ENCODE measurements at regions of chr13 and their contacts with region 1.

Region 1: GRCh38 chr13:44259045-44260027 is 114.3 kb upstream of the SERP2 start:
- DNase-seq: peak; percentile 47
- ATAC-seq: peak; percentile 92
- H3K4me3 ChIP-seq: peak overlapping the region; percentile 42
- H3K27ac ChIP-seq: peak overlapping the region; percentile 58
- H3K4me1 ChIP-seq: peaks cover 10% of the 10 kb centered on the region
- H3K27me3 ChIP-seq: no peaks in the 10 kb centered on the region
- CTCF ChIP-seq: no peak
- EP300 ChIP-seq: peak in 1 of 2 experiments; percentile 65; a peak in 1 of 4 replicates
- POLR2A ChIP-seq: 0 out of 2 replicates have a peak, but pooled peaks have one; percentile 22
- RAD21 ChIP-seq: no peak

Region 2: GRCh38 chr13:43963726-43964125 is 295.6 kb before region 1 on chr13:
- CTCF ChIA-PET with region 1: no interaction called
- POLR2A ChIA-PET with region 1: no interaction called
- RAD21 ChIA-PET with region 1: no interaction called
- SMC1A ChIA-PET with region 1: no interaction called
- in situ Hi-C with region 1: no loop called
- intact Hi-C with region 1: no loop called
- DNase-seq: no peak
- ATAC-seq: no peak
- H3K4me3 ChIP-seq: no peak overlapping the region
- H3K27ac ChIP-seq: no peak overlapping the region
- H3K4me1 ChIP-seq: no peaks in the 10 kb centered on the region
- H3K27me3 ChIP-seq: no peaks in the 10 kb centered on the region
- CTCF ChIP-seq: peak in 2 of 3 experiments; percentile 15 to 16; a peak in 2 of 6 replicates
- EP300 ChIP-seq: no peak
- POLR2A ChIP-seq: no peak
- RAD21 ChIP-seq: no peak

Region 3: GRCh38 chr13:44197791-44198770 is 61.3 kb before region 1 on chr13:
- CTCF ChIA-PET with region 1: no interaction called
- POLR2A ChIA-PET with region 1: no interaction called
- RAD21 ChIA-PET with region 1: no interaction called
- SMC1A ChIA-PET with region 1: no interaction called
- in situ Hi-C with region 1: no loop called
- intact Hi-C with region 1: loop called (anchors 1 kb)
- DNase-seq: peak; percentile 34
- ATAC-seq: peak; percentile 87
- H3K4me3 ChIP-seq: no peak overlapping the region
- H3K27ac ChIP-seq: no peak overlapping the region
- H3K4me1 ChIP-seq: peaks cover 12% of the 10 kb centered on the region
- H3K27me3 ChIP-seq: peaks cover 0 to 5% of the 10 kb centered on the region in 2 experiments; a peak in 2 of 4 replicates
- CTCF ChIP-seq: no peak
- EP300 ChIP-seq: no peak
- POLR2A ChIP-seq: no peak
- RAD21 ChIP-seq: no peak

Region 4: GRCh38 chr13:44231786-44232516 is 27.4 kb before region 1 on chr13:
- CTCF ChIA-PET with region 1: no interaction called
- POLR2A ChIA-PET with region 1: no interaction called
- RAD21 ChIA-PET with region 1: no interaction called
- SMC1A ChIA-PET with region 1: no interaction called
- in situ Hi-C with region 1: no loop called
- intact Hi-C with region 1: no loop called
- DNase-seq: no peak
- ATAC-seq: no peak
- H3K4me3 ChIP-seq: no peak overlapping the region
- H3K27ac ChIP-seq: no peak overlapping the region
- H3K4me1 ChIP-seq: peaks cover 2% of the 10 kb centered on the region
- H3K27me3 ChIP-seq: peaks cover 0 to 5% of the 10 kb centered on the region in 2 experiments; a peak in 3 of 4 replicates
- CTCF ChIP-seq: no peak
- EP300 ChIP-seq: no peak
- POLR2A ChIP-seq: no peak
- RAD21 ChIP-seq: no peak

Region 5: DNA sequence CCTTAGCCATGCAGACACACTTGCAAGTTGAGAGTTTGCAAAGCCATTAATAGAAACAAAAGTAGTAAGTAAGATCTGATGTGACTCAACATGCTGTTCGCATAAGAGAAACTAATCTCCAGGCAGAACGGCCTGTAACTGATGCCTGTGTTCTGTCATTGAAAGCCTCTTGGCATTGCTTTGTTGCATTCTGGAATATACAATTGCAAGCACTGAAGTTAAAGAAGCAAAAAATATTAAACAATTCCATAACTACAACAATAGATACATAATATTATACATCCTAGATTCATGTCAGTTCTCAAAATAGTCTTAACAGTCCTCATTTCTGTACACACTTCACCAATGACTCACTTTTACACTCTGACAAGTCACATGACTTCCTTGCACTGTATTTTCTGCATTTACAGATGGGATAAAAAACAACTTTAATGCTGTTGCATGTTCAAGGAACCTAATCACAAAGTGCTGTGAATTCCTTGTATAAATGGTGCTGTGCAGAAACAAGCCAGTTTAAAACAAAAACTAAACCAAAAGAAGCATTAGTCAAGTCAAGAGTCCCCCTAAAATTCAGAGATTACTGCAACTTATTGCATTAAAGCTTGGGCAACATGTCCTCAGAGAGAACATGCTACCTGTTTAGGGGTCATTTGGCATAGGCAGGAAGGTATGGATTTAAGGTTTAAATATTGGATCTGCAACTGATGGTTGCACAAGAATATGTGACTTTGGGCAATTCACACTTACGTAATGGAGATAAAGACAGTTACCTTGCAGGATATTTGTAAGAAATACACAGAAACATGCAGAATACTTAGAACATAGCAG is 34.8 kb after region 1 on chr13:
- CTCF ChIA-PET with region 1: no interaction called
- POLR2A ChIA-PET with region 1: no interaction called
- RAD21 ChIA-PET with region 1: no interaction called
- SMC1A ChIA-PET with region 1: no interaction called
- in situ Hi-C with region 1: no loop called
- intact Hi-C with region 1: no loop called
- DNase-seq: no peak
- ATAC-seq: no peak
- H3K4me3 ChIP-seq: no peak overlapping the region
- H3K27ac ChIP-seq: no peak overlapping the region
- H3K4me1 ChIP-seq: no peaks in the 10 kb centered on the region
- H3K27me3 ChIP-seq: no peaks in the 10 kb centered on the region
- CTCF ChIP-seq: no peak
- EP300 ChIP-seq: no peak
- POLR2A ChIP-seq: no peak
- RAD21 ChIP-seq: no peak

Region 6: DNA sequence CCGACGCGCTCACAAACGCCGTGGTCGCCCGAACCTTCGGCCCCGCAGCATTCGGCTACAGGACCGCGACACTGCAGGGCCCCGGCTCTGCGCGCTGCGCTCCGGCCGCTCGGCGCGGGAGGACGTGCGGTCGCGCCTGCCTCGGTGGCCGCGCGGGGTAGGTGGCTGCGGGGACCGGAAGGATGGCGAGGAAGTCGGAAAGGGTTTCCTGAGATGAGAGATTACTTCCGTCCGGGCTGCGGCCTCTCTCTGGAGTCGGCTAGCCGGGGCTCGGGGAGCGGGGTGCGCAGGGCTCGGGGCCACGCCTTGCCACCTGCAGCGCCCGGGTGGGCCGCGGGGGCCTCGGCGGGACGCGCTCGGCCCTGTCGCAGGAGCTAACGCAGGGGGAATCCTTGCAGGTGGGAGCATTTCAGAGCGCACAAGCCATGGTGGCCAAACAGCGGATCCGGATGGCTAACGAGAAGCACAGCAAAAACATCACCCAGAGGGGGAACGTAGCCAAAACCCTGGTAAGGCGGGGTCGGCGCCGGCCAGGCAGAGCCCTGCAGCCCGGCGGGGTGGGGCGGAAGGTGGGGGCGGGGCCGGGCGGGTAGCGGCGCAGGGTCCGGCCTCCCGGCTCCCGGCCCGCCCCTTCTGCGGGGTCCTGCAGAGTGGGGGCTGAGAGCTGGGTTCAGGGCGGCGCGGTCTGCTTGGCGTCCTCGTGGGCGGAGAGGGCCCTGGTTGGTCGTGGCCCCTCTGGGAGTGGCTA is 114.4 kb after region 1 on chr13 and contains the start of gene SERP2:
- CTCF ChIA-PET with region 1: no interaction called
- POLR2A ChIA-PET with region 1: no interaction called
- RAD21 ChIA-PET with region 1: no interaction called
- SMC1A ChIA-PET with region 1: no interaction called
- in situ Hi-C with region 1: no loop called
- intact Hi-C with region 1: no loop called
- DNase-seq: no peak
- ATAC-seq: no peak
- H3K4me3 ChIP-seq: no peak within 1 kb of the TSS
- H3K27ac ChIP-seq: no peak within 1 kb of the TSS
- H3K4me1 ChIP-seq: no peaks in the 10 kb centered on the region
- H3K27me3 ChIP-seq: peaks cover 7 to 11% of the 10 kb centered on the region in 2 experiments; a peak in 3 of 4 replicates
- CTCF ChIP-seq: no peak
- EP300 ChIP-seq: no peak
- POLR2A ChIP-seq: no peak
- RAD21 ChIP-seq: no peak
- polyA plus RNA-seq, gene SERP2: not detected

Measured in GM12878 (cell line).